ENCODE measurements at regions of chr6 and their contacts with region 1.

Region 1: DNA sequence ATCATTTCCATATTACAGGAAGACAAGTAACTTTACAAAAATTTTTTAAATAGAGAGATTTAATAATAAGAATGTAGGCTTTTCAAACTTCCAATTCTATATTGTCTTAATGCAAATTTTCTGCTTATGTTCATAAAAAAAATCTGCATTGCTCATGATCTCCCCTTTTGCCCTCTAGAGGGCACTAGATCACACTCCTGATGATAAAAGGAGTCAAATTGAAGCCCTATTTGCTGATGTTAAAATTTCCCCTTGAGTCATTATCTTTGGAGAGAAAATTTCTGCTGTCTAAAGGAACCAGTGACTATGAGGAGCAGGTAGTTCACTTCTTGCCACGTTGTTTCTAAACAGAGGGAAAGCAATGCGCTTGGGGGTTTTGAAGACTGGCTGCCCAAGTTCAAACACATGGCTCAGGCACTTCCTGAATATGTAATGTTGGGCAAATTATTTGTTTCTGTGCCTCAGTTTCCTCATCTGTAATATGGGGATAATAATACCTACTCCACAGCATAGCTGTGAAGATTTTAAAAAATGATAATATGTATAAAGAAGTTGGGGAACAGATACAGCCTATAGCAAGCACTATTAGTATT is 874.2 kb downstream of the TFAP2A start:
- DNase-seq: peak; percentile 86
- H3K4me3 ChIP-seq: no peak overlapping the region
- H3K27ac ChIP-seq: no peak overlapping the region
- H3K4me1 ChIP-seq: no peaks in the 10 kb centered on the region
- H3K27me3 ChIP-seq: no peaks in the 10 kb centered on the region
- CTCF ChIP-seq: peak; percentile 85

Region 2: DNA sequence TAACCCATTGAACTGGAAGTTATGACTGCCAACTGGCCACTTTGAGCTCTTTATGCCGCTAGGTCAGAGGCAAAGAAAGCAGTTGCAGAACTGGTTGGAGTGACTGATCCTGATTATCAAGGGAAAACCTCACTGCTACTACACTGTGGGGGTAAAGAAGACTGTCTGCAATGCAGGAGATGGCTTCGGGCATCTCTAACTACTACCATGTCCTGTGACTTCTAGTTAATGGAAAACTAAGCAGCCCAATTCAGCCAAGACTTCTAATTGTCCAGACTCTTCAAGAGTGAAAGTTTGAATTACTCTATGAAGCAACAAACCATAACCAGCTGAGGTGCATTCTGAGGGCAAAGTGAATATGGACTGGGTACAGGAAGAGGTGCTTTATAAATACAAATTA is 331.7 kb before region 1 on chr6:
- CTCF ChIA-PET with region 1: no interaction called
- POLR2A ChIA-PET with region 1: no interaction called
- intact Hi-C with region 1: no loop called
- DNase-seq: no peak
- H3K4me3 ChIP-seq: no peak overlapping the region
- H3K27ac ChIP-seq: no peak overlapping the region
- H3K4me1 ChIP-seq: peaks cover 39% of the 10 kb centered on the region
- H3K27me3 ChIP-seq: no peaks in the 10 kb centered on the region
- CTCF ChIP-seq: no peak

Region 3: DNA sequence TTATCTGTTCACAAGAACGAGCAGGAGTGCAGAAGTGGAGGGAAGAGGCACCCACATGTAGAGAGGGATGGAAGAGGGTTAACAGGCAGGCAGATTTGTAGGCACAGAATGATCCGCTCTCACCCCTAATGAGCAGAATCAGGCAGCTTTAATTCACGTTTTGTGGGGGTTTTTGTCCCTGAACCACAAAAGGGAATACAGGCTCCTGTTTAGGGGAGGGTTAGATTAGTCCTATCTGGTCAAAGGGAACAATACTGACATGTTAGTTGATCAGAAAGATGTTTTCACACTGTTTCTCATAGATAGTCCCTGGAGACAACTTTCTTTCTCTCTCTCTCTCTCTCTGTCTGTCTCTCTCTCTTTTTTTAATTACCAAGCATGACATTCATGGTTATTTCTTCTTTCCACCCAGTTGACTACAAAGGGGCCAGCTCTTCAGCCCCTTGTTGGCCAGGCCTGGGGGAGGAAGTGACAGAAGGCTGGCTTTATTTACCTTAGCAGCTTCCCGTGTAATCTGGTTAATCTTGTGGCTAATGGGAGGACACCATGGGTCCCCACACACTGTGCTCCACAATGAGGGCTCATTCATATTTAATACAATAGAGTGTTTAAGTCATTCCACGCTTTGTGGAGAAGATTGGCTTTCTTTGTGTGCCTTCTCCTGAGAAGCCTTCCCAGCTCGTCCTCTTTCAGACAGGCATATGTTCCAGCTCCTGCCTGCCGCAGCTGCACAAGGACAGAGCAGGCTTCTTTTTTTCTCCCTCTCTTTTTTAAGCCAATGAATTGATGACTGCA is 84.6 kb before region 1 on chr6:
- CTCF ChIA-PET with region 1: no interaction called
- POLR2A ChIA-PET with region 1: no interaction called
- intact Hi-C with region 1: loop called (anchors 5 kb)
- DNase-seq: peak; percentile 91
- H3K4me3 ChIP-seq: no peak overlapping the region
- H3K27ac ChIP-seq: peak overlapping the region; percentile 32
- H3K4me1 ChIP-seq: peaks cover 22% of the 10 kb centered on the region
- H3K27me3 ChIP-seq: no peaks in the 10 kb centered on the region
- CTCF ChIP-seq: no peak

Region 4: DNA sequence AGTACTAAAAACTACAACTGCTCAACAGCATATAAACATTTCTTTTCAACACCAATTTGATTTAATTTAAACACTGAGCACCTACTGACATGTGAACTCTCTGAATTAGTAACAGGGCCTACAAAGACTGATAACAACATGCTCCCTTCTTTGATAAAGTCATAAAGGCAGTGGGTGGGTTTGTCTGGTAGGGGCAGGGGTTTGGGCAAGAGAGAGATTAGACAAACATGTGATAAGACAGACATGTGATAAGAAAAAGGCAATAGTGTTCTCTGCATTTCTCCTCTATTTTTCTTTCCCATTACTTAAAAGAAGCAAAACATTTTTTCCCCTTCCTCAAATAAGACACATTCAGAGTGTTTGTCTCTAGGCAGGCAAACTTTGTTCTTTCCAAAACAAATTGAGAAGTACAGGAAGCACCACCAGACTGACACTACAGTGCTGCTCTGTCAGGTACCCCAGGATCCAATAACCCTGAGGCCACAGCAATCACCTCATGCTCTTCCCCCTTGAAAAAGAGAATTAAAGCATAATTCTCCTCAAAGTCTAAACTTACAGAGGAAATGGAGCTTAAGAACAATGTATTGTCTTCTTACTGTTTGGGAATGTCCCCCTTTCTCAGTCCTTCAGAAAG is 1141.8 kb after region 1 on chr6:
- CTCF ChIA-PET with region 1: no interaction called
- POLR2A ChIA-PET with region 1: no interaction called
- intact Hi-C with region 1: no loop called
- DNase-seq: no peak
- H3K4me3 ChIP-seq: no peak overlapping the region
- H3K27ac ChIP-seq: no peak overlapping the region
- H3K4me1 ChIP-seq: no peaks in the 10 kb centered on the region
- H3K27me3 ChIP-seq: peaks cover 43% of the 10 kb centered on the region
- CTCF ChIP-seq: no peak

Measured in A673 (cell line).